CD4-positive, alpha-beta T cell (primary cell): ENCODE measurements at regions of chr15 and their contacts with region 1.

Region 1: GRCh38 chr15:70097337-70098169 is at the start of gene TLE3:
- DNase-seq: peak; percentile 96 to 99 (median 98)
- ATAC-seq: peak; percentile 54
- H3K4me3 ChIP-seq: peak within 1 kb of the TSS; percentile 97
- H3K4me3 Mint-ChIP-seq: peak within 1 kb of the TSS; percentile 96
- H3K27ac ChIP-seq: peak within 1 kb of the TSS; percentile 90
- H3K27ac Mint-ChIP-seq: peak within 1 kb of the TSS; percentile 95
- H3K4me1 ChIP-seq: peaks cover 70% of the 10 kb centered on the region
- H3K4me1 Mint-ChIP-seq: peaks cover 69% of the 10 kb centered on the region
- H3K27me3 ChIP-seq: no peaks in the 10 kb centered on the region
- H3K27me3 Mint-ChIP-seq: peaks cover 9% of the 10 kb centered on the region
- CTCF ChIP-seq: peak; percentile 61
- total RNA-seq, gene TLE3: 159 to 167 TPM

Region 2: DNA sequence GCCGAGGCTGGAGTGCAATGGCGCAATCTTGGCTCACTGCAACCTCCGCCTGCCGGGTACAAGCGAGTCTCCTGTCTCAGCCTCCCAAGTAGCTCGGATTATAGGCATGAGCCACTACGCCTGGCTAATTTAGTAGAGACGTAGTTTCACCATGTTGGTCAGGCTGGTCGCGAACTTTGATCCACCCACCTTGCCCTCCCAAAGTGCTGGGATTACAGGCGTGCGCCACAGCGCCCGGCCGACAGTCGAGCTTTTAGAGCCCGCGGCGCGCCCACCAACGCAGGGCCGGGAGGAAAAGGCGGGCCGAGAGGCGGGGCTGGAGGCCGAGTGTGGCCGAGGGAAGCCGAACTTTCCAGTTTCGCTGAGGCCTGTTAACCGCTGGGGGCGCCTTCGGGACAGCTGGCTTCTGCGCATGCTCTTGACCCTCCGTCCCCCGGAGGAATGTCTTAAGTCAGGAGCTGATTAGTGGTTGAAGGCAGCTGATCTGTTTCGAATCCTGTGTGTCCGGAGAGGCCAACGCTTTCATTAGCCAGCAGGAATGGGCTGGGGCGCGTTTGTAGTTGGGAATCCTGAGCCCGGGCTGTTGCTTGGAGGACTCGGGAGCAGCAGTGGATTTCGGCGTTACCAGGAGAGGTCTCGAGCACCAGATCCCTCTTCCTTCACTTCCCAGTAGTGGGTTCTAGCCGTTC is 634.9 kb before region 1 on chr15:
- CTCF ChIA-PET with region 1: interaction called, 8 read pairs
- POLR2A ChIA-PET with region 1: interaction called, 20 read pairs
- intact Hi-C with region 1: no loop called
- DNase-seq: peak; percentile 84 to 96 (median 90)
- ATAC-seq: peak; percentile 94
- H3K4me3 ChIP-seq: peak overlapping the region; percentile 81
- H3K4me3 Mint-ChIP-seq: peak overlapping the region; percentile 94
- H3K27ac ChIP-seq: peak overlapping the region; percentile 55 to 71
- H3K27ac Mint-ChIP-seq: peak overlapping the region; percentile 90
- H3K4me1 ChIP-seq: peaks cover 41% of the 10 kb centered on the region
- H3K4me1 Mint-ChIP-seq: peaks cover 37% of the 10 kb centered on the region
- H3K27me3 ChIP-seq: no peaks in the 10 kb centered on the region
- H3K27me3 Mint-ChIP-seq: no peaks in the 10 kb centered on the region
- CTCF ChIP-seq: peak; percentile 86

Region 3: GRCh38 chr15:69576035-69576526 is 521.5 kb before region 1 on chr15:
- CTCF ChIA-PET with region 1: no interaction called
- POLR2A ChIA-PET with region 1: interaction called, 3 read pairs
- intact Hi-C with region 1: loop called in 1 of 2 experiments (anchors 10 kb)
- DNase-seq: peak; percentile 44 to 81 (median 69)
- ATAC-seq: peak; percentile 76
- H3K4me3 ChIP-seq: no peak overlapping the region
- H3K4me3 Mint-ChIP-seq: no peak overlapping the region
- H3K27ac ChIP-seq: no peak overlapping the region
- H3K27ac Mint-ChIP-seq: no peak overlapping the region
- H3K4me1 ChIP-seq: peaks cover 34% of the 10 kb centered on the region
- H3K4me1 Mint-ChIP-seq: peaks cover 33% of the 10 kb centered on the region
- H3K27me3 ChIP-seq: no peaks in the 10 kb centered on the region
- H3K27me3 Mint-ChIP-seq: no peaks in the 10 kb centered on the region
- CTCF ChIP-seq: peak; percentile 78

Region 4: DNA sequence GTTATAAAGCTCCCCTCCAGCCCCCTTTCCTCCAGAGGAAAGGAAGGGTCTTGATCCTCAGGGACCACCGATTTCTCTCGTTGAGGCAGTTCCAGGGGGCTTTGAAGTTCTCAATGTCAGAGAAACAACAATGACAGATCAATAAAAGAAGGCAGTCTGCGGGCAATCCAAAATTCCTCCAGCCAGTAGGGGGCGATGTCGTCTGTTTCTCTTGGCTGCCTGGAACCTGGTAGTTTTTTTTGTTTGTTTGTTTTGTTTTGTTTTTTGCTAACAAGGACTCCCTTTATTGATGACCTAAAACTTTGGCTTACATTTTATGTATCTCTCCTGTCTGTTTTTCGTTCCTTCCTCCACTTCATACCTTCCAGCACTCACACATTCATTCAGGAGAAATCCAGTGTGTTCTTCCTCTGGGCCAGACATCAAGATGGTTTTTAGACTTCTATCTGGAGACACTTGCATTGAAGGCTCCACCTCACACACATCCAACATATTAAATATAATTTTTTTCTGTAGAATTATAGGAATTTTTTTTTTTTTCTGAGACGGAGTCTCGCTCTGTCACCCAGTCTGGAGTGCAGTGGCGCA is 368.3 kb before region 1 on chr15:
- CTCF ChIA-PET with region 1: interaction called, 6 read pairs
- POLR2A ChIA-PET with region 1: interaction called, 4 read pairs
- intact Hi-C with region 1: loop called (anchors 2 to 5 kb)
- DNase-seq: peak; percentile 65 to 90 (median 76)
- ATAC-seq: peak; percentile 58
- H3K4me3 ChIP-seq: no peak overlapping the region
- H3K4me3 Mint-ChIP-seq: no peak overlapping the region
- H3K27ac ChIP-seq: no peak overlapping the region
- H3K27ac Mint-ChIP-seq: no peak overlapping the region
- H3K4me1 ChIP-seq: peaks cover 23% of the 10 kb centered on the region
- H3K4me1 Mint-ChIP-seq: peaks cover 17% of the 10 kb centered on the region
- H3K27me3 ChIP-seq: no peaks in the 10 kb centered on the region
- H3K27me3 Mint-ChIP-seq: no peaks in the 10 kb centered on the region
- CTCF ChIP-seq: peak; percentile 96

Region 5: DNA sequence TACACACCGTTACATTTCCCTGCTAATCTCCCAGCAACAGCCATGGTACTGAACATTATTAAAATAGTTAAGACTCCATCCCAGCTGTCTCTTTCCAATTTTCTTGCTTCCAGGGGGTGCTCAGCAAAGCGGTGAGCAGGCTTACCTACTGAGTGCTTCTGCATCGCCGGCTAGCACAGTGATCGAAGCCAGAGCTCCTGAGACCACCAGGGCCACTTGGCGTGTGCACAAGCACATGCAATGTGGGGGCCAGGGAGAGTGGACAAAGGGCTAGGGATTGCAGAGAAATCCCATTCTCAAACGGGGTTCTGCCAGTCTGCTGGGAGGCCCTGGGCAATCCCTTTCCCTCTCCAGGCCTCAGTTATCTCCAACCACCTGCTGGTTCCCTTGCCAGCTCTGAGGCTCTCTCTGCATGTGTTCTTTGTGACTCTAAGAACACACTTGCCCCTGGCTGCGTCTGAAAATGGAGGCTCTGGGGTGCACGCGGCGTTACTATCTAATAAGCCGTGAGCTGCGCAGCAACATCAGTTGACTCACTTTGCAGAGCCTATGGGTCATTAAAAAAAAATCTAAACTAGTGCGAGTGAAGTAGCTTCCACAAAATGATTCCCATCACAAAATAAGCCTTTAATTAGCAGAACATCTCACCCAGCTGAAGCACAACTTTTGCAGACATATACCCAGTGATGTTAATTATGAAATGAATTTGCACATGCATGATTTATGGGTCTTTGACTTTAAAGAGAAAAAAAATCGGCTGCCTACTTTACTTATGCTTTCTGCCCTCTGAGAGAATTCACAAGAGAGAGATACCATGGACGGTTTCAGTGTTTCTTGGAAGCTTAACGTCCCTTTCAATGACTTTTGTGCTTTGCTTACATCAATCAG is 271.4 kb before region 1 on chr15:
- CTCF ChIA-PET with region 1: no interaction called
- POLR2A ChIA-PET with region 1: no interaction called
- intact Hi-C with region 1: no loop called
- DNase-seq: no peak
- ATAC-seq: no peak
- H3K4me3 ChIP-seq: no peak overlapping the region
- H3K4me3 Mint-ChIP-seq: no peak overlapping the region
- H3K27ac ChIP-seq: no peak overlapping the region
- H3K27ac Mint-ChIP-seq: no peak overlapping the region
- H3K4me1 ChIP-seq: no peaks in the 10 kb centered on the region
- H3K4me1 Mint-ChIP-seq: no peaks in the 10 kb centered on the region
- H3K27me3 ChIP-seq: no peaks in the 10 kb centered on the region
- H3K27me3 Mint-ChIP-seq: no peaks in the 10 kb centered on the region
- CTCF ChIP-seq: no peak

Region 6: DNA sequence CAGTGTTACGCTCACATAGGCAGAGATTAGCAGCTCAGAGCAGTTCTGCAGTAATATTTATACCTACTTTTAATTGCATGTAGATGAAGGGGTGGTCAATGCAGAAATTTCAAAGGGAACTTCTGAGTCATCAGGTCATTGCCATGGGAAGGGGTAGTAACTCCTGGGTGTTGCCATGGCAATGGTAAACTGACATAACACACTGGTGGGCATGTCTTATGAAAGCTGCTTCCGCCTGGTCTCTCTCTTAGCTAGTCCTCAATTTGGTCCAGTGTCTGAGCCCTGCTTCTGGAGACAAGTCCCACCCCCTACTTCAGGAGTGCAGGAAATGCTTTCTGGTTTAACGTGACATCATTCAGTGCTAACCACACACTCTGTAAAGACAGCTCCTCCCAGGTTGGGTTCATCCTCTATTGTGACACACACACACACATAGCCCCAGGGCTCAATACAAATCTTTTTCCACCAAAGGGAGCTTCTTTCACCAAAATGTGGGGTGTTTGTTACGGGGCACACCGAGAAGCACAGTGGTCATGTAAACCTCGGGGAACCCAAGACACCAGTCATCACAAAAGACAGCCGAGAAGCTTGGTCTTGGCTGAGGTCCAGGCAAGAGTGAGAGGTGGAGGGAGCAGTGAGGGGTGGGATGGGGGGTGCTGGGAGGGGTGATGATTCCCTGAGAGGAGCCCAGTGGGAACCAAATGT is 74.3 kb before region 1 on chr15:
- CTCF ChIA-PET with region 1: interaction called, 10 read pairs
- POLR2A ChIA-PET with region 1: interaction called, 9 read pairs
- intact Hi-C with region 1: no loop called
- DNase-seq: peak in 13 of 14 experiments; percentile 18 to 91 (median 40)
- ATAC-seq: peak; percentile 98
- H3K4me3 ChIP-seq: no peak overlapping the region
- H3K4me3 Mint-ChIP-seq: no peak overlapping the region
- H3K27ac ChIP-seq: no peak overlapping the region
- H3K27ac Mint-ChIP-seq: peak overlapping the region; percentile 48
- H3K4me1 ChIP-seq: peaks cover 20% of the 10 kb centered on the region
- H3K4me1 Mint-ChIP-seq: peaks cover 10% of the 10 kb centered on the region
- H3K27me3 ChIP-seq: no peaks in the 10 kb centered on the region
- H3K27me3 Mint-ChIP-seq: no peaks in the 10 kb centered on the region
- CTCF ChIP-seq: no peak

Region 7: GRCh38 chr15:70488002-70488605 is 390.6 kb after region 1 on chr15:
- CTCF ChIA-PET with region 1: no interaction called
- POLR2A ChIA-PET with region 1: interaction called, 27 read pairs
- intact Hi-C with region 1: loop called (anchors 5 kb)
- DNase-seq: peak; percentile 51 to 86 (median 67)
- ATAC-seq: no peak
- H3K4me3 ChIP-seq: no peak overlapping the region
- H3K4me3 Mint-ChIP-seq: no peak overlapping the region
- H3K27ac ChIP-seq: no peak overlapping the region
- H3K27ac Mint-ChIP-seq: no peak overlapping the region
- H3K4me1 ChIP-seq: peaks cover 63% of the 10 kb centered on the region
- H3K4me1 Mint-ChIP-seq: peaks cover 61% of the 10 kb centered on the region
- H3K27me3 ChIP-seq: peaks cover 0 to 4% of the 10 kb centered on the region in 2 experiments
- H3K27me3 Mint-ChIP-seq: no peaks in the 10 kb centered on the region
- CTCF ChIP-seq: peak; percentile 92